Activated T-helper 2 cell treated with anti-CD3 and anti-CD28 coated beads, Interferon-gamma antibody, Interleukin-2, Interleukin-4, amounts not matched to agents 10 μg/mL and 5 μg/mL and 100 μg/mL, durations not matched to agents 14 hours and 24 hours and 36 hours (primary cell): ENCODE measurements at regions of chr11 and their contacts with region 1.

Region 1: GRCh38 chr11:8566613-8567210 is 27.3 kb downstream of the STK33 start:
- DNase-seq: no peak
- H3K4me3 Mint-ChIP-seq: no peak overlapping the region
- H3K27ac Mint-ChIP-seq: no peak overlapping the region
- H3K4me1 Mint-ChIP-seq: peaks cover 2% of the 10 kb centered on the region
- H3K27me3 Mint-ChIP-seq: peaks cover 31% of the 10 kb centered on the region

Region 2: DNA sequence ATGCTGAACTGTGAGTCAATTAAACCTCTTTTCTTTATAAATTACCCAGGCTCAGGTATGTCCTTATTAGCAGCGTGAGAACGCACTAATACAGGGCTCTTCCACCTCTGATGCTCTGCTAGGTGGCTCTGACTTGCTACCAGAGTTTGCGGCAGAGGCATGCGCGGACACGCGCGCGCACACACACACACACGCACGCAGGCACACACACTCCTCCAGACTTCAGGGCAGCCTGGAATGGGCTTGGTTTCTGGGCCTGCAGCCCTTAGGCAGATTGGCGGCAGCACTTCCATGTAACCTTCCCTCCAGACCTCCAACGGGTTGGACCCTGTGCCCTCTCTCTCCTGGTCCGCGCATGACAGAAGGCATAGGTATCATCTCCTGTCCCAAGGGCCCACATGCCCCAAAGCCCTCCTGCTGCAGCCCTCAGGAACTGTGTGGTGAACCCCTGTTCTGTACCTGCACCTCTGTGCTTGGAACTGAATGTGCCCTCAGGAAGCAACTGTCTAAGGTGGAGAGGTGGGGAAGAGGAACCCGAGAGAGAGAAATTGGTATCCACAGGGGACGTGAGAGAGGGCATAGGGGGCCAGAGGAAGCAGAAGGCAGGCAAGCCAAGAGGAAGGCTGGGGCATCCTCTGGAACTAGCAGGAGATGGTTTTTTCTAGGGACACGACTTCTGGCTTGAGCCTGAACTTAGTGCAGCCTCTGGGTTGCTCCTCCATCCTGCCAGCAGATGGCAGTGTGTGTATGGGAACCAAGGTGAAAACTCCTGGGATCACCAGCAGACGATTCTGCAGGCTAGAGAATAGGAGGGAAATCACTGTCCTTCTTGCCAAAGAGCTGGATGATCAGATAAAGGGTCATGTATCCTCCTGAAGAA is 374.5 kb before region 1 on chr11:
- intact Hi-C with region 1: loop called (anchors 10 kb)
- DNase-seq: no peak
- H3K4me3 Mint-ChIP-seq: no peak overlapping the region
- H3K27ac Mint-ChIP-seq: no peak overlapping the region
- H3K4me1 Mint-ChIP-seq: no peaks in the 10 kb centered on the region
- H3K27me3 Mint-ChIP-seq: peaks cover 7% of the 10 kb centered on the region

Region 3: DNA sequence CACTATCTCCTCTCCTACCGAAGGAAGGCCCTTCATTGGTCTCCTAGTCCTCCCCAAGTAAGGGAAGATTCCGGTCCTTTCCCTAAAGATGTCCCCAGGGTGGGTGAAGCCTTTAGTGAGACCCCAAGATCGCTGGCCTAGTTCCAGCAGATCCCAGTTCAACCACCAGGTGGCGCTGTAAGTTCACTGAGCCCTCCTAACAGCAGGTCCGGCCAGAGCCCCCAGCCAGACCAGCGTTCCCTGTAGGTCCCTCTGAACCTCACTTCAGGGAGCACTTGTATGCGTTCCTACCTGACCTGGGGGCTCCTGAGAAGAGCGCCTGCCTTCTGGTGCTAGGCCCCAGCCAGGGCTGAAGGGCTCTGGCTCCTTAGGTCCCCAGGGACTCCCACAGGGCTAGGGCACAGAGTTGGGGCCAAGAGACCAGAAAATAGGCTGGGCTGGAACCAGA is 341.1 kb before region 1 on chr11:
- intact Hi-C with region 1: loop called (anchors 2 kb)
- DNase-seq: peak; percentile 36
- H3K4me3 Mint-ChIP-seq: no peak overlapping the region
- H3K27ac Mint-ChIP-seq: no peak overlapping the region
- H3K4me1 Mint-ChIP-seq: peaks cover 3% of the 10 kb centered on the region
- H3K27me3 Mint-ChIP-seq: no peaks in the 10 kb centered on the region

Region 4: DNA sequence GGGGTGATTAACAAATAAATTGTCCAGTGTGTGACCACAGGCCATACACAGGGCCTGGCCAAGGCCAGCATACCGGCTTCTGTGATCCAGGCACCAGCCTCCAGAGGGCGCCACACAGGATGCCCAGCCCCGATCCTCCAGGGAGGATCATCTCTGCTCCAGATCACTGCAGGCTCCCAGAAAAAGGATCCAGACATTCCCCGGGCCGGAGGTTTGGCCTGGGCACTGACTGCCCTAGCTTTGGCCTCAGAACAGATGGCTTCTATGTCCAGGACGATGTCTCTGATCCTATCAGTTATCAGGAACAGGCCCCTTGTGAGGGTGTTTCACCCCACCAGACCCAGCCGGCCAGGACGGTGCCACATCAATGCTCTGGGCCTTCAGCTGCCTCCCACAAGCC is 228.6 kb before region 1 on chr11:
- intact Hi-C with region 1: loop called (anchors 1 kb)
- DNase-seq: no peak
- H3K4me3 Mint-ChIP-seq: no peak overlapping the region
- H3K27ac Mint-ChIP-seq: no peak overlapping the region
- H3K4me1 Mint-ChIP-seq: peaks cover 5% of the 10 kb centered on the region
- H3K27me3 Mint-ChIP-seq: no peaks in the 10 kb centered on the region